ENCODE measurements at regions of chr11 and their contacts with region 1.

Region 1: GRCh38 chr11:57667736-57668435 is at the start of gene ZDHHC5:
- DNase-seq: peak; percentile 98 to 100 (median 100)
- ATAC-seq: peak; percentile 83
- H3K4me3 ChIP-seq: peak within 1 kb of the TSS; percentile 87
- H3K4me3 Mint-ChIP-seq: peak within 1 kb of the TSS; percentile 89
- H3K27ac ChIP-seq: peak within 1 kb of the TSS; percentile 98
- H3K27ac Mint-ChIP-seq: peak within 1 kb of the TSS; percentile 95
- H3K4me1 ChIP-seq: peaks cover 32% of the 10 kb centered on the region
- H3K4me1 Mint-ChIP-seq: peaks cover 55% of the 10 kb centered on the region
- H3K27me3 ChIP-seq: no peaks in the 10 kb centered on the region
- H3K27me3 Mint-ChIP-seq: no peaks in the 10 kb centered on the region
- CTCF ChIP-seq: peak; percentile 52
- total RNA-seq, gene ZDHHC5: 59.7 to 61.1 TPM

Region 2: DNA sequence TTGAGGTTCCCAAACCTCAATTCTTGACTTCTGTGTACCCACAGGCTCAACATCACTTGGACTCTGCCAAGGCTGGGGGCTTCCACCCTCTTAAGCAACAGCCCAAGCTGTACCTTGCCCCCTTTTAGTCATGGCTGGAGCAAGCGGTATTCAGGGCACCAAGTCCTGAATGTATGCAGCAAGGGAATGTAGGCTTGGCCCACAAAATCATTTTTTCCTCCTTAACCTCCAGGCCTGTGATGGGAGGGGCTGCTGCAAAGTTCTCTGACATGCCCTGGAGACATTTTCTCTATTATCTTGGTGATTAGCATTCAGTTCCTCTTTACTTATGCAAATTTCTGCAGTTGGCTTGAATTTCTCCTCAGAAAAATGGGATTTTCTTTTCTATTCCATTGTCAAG is 1861.6 kb before region 1 on chr11:
- CTCF ChIA-PET with region 1: no interaction called
- POLR2A ChIA-PET with region 1: no interaction called
- intact Hi-C with region 1: no loop called
- DNase-seq: no peak
- ATAC-seq: no peak
- H3K4me3 ChIP-seq: no peak overlapping the region
- H3K4me3 Mint-ChIP-seq: no peak overlapping the region
- H3K27ac ChIP-seq: no peak overlapping the region
- H3K27ac Mint-ChIP-seq: no peak overlapping the region
- H3K4me1 ChIP-seq: no peaks in the 10 kb centered on the region
- H3K4me1 Mint-ChIP-seq: no peaks in the 10 kb centered on the region
- H3K27me3 ChIP-seq: no peaks in the 10 kb centered on the region
- H3K27me3 Mint-ChIP-seq: no peaks in the 10 kb centered on the region
- CTCF ChIP-seq: no peak

Region 3: DNA sequence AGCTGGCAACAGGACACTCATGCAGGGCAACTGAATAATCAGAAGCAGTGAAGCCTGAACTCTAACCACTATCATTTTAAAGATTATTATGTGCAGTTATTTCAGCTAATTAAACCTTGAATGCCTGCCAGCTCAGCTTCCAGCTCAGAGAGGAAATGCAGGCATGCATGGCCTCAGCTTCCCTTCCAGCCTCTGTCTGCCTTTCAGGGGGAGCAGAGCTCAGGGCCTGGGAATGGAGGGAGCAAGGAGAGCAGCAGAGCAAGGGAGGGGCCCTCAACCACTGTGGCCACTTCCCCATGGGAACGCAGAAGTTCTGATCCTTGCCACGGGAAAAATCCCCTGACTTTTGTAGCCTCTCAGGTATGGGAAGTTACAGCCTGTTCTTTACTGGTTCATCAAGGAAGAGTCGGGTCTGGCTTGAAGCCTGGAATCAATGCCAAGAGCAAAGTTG is 398.3 kb before region 1 on chr11:
- CTCF ChIA-PET with region 1: no interaction called
- POLR2A ChIA-PET with region 1: no interaction called
- intact Hi-C with region 1: no loop called
- DNase-seq: no peak
- ATAC-seq: no peak
- H3K4me3 ChIP-seq: no peak overlapping the region
- H3K4me3 Mint-ChIP-seq: no peak overlapping the region
- H3K27ac ChIP-seq: no peak overlapping the region
- H3K27ac Mint-ChIP-seq: no peak overlapping the region
- H3K4me1 ChIP-seq: no peaks in the 10 kb centered on the region
- H3K4me1 Mint-ChIP-seq: no peaks in the 10 kb centered on the region
- H3K27me3 ChIP-seq: peaks cover 0 to 8% of the 10 kb centered on the region in 2 experiments
- H3K27me3 Mint-ChIP-seq: peaks cover 34% of the 10 kb centered on the region
- CTCF ChIP-seq: no peak

Region 4: DNA sequence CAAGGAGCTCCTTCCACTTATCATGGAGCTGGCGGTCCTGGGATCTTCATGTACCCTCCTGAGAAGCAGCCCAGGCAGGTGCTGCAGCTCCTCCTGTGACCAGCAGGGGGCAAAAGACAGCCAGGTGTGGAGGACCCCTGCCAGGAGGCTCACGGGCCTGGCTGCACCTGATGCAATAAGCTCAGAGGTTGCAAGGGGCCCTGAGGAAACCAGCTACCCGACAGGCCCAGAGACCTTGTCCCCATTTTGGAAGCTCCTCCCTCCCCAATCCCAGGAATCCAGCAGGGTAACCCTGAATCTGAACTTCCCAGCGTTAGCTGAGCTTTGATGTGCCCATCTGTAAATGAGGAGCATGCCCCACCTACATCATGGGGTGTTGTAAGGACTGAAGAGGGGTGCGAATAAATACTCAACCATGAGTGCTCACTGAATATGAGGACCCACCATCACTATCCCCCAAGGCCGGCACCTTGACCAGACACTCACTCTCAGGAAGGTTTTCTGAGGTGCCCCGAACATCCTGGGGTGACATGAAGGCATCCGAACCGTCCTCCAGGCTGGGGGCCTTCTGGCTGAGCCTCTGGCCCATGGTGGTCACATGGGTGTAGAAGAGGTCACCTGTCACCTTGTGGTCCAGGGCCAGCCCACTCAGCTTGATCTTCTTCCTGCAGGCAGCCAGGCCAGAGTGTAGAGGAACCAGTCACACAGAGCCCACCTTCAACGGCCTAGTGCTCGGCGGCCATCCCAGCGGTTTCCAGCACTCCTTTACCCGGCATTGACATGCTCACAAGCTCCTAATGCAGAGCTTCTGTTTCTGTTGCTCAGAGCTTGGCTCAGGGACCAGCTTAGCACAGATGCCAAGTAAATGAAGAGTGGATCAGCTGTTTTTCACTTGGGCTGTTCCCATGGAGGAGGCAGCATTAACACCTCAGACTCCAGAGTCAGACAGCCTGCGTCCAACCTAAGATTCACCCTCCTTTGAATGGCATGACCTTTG is 174.1 kb before region 1 on chr11:
- CTCF ChIA-PET with region 1: no interaction called
- POLR2A ChIA-PET with region 1: no interaction called
- intact Hi-C with region 1: no loop called
- DNase-seq: peak; percentile 63 to 84 (median 69)
- ATAC-seq: peak; percentile 94
- H3K4me3 ChIP-seq: no peak overlapping the region
- H3K4me3 Mint-ChIP-seq: no peak overlapping the region
- H3K27ac ChIP-seq: no peak overlapping the region
- H3K27ac Mint-ChIP-seq: no peak overlapping the region
- H3K4me1 ChIP-seq: peaks cover 4% of the 10 kb centered on the region
- H3K4me1 Mint-ChIP-seq: no peaks in the 10 kb centered on the region
- H3K27me3 ChIP-seq: no peaks in the 10 kb centered on the region
- H3K27me3 Mint-ChIP-seq: no peaks in the 10 kb centered on the region
- CTCF ChIP-seq: peak; percentile 97

Region 5: GRCh38 chr11:57567515-57568329 is 100.2 kb before region 1 on chr11 and contains the start of gene UBE2L6:
- CTCF ChIA-PET with region 1: interaction called, 5 read pairs
- POLR2A ChIA-PET with region 1: interaction called, 10 read pairs
- intact Hi-C with region 1: no loop called
- DNase-seq: peak; percentile 35 to 94 (median 74)
- ATAC-seq: peak; percentile 76
- H3K4me3 ChIP-seq: peak within 1 kb of the TSS; percentile 95
- H3K4me3 Mint-ChIP-seq: peak within 1 kb of the TSS; percentile 100
- H3K27ac ChIP-seq: peak within 1 kb of the TSS; percentile 80 to 82
- H3K27ac Mint-ChIP-seq: peak within 1 kb of the TSS; percentile 92
- H3K4me1 ChIP-seq: peaks cover 33% of the 10 kb centered on the region
- H3K4me1 Mint-ChIP-seq: peaks cover 53% of the 10 kb centered on the region
- H3K27me3 ChIP-seq: no peaks in the 10 kb centered on the region
- H3K27me3 Mint-ChIP-seq: no peaks in the 10 kb centered on the region
- CTCF ChIP-seq: no peak
- total RNA-seq, gene UBE2L6: 35.0 to 36.2 TPM

Region 6: GRCh38 chr11:57657194-57658022 is 10.5 kb before region 1 on chr11 and contains the start of gene CLP1:
- CTCF ChIA-PET with region 1: no interaction called
- POLR2A ChIA-PET with region 1: interaction called, 6 read pairs
- intact Hi-C with region 1: loop called (anchors 1 kb)
- DNase-seq: peak; percentile 94 to 100 (median 98)
- ATAC-seq: peak; percentile 95
- H3K4me3 ChIP-seq: peak within 1 kb of the TSS; percentile 93
- H3K4me3 Mint-ChIP-seq: peak within 1 kb of the TSS; percentile 96
- H3K27ac ChIP-seq: peak within 1 kb of the TSS; percentile 92 to 93
- H3K27ac Mint-ChIP-seq: peak within 1 kb of the TSS; percentile 90
- H3K4me1 ChIP-seq: peaks cover 24% of the 10 kb centered on the region
- H3K4me1 Mint-ChIP-seq: peaks cover 24% of the 10 kb centered on the region
- H3K27me3 ChIP-seq: no peaks in the 10 kb centered on the region
- H3K27me3 Mint-ChIP-seq: no peaks in the 10 kb centered on the region
- CTCF ChIP-seq: no peak
- total RNA-seq, gene CLP1: 21.8 to 24.2 TPM

Region 7: GRCh38 chr11:57741132-57742086 is 73.5 kb after region 1 on chr11 and contains the start of gene SELENOH:
- CTCF ChIA-PET with region 1: no interaction called
- POLR2A ChIA-PET with region 1: interaction called, 20 read pairs
- intact Hi-C with region 1: loop called (anchors 1 kb)
- DNase-seq: peak; percentile 82 to 97 (median 90)
- ATAC-seq: peak; percentile 89
- H3K4me3 ChIP-seq: peak within 1 kb of the TSS; percentile 92
- H3K4me3 Mint-ChIP-seq: peak within 1 kb of the TSS; percentile 97
- H3K27ac ChIP-seq: peak within 1 kb of the TSS; percentile 91 to 96
- H3K27ac Mint-ChIP-seq: peak within 1 kb of the TSS; percentile 95
- H3K4me1 ChIP-seq: peaks cover 31% of the 10 kb centered on the region
- H3K4me1 Mint-ChIP-seq: peaks cover 38% of the 10 kb centered on the region
- H3K27me3 ChIP-seq: no peaks in the 10 kb centered on the region
- H3K27me3 Mint-ChIP-seq: no peaks in the 10 kb centered on the region
- CTCF ChIP-seq: no peak
- total RNA-seq, gene SELENOH: 48.0 to 48.5 TPM

Region 8: GRCh38 chr11:57900320-57900719 is 232.4 kb after region 1 on chr11:
- CTCF ChIA-PET with region 1: no interaction called
- POLR2A ChIA-PET with region 1: no interaction called
- intact Hi-C with region 1: no loop called
- DNase-seq: no peak
- ATAC-seq: no peak
- H3K4me3 ChIP-seq: no peak overlapping the region
- H3K4me3 Mint-ChIP-seq: no peak overlapping the region
- H3K27ac ChIP-seq: no peak overlapping the region
- H3K27ac Mint-ChIP-seq: no peak overlapping the region
- H3K4me1 ChIP-seq: no peaks in the 10 kb centered on the region
- H3K4me1 Mint-ChIP-seq: no peaks in the 10 kb centered on the region
- H3K27me3 ChIP-seq: peaks cover 0 to 14% of the 10 kb centered on the region in 2 experiments
- H3K27me3 Mint-ChIP-seq: peaks cover 35% of the 10 kb centered on the region
- CTCF ChIP-seq: no peak

Region 9: DNA sequence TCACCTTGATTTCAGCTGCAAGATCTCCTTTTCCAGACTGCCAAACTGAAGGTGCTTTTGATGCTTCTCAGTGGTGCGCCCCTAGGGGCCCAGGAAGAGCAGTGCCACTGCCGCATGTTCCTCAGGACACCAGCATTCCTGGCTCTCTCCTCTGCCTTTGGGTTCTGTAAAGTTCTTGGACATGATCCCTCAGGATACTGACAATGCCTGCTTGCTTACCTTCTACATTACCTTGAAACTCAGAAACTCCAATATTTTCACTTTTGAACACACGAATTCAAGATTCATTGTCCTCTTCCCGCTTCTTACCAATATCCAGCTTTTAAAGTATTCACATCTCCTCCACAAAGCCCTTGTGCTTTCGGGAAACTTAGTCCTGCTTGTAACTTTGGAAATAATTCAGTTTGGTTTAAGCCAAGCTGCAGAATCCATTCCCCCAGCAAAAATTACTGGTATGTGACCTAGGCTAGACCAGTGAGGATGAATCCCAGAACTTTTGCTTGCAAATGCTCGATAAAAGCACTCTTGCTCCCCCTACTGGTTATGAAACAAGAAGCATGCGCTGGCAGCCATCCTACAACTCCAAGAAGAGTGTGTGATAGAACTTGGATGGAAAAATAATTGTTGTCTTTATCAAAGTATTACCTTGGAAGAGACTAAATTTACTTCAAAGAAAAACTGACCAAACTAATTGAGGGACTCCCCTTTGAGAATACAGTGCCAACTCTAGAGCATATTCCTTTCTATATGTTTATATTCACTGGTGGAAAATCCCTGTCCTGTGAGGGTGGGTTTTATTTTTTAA is 856.5 kb after region 1 on chr11:
- CTCF ChIA-PET with region 1: no interaction called
- POLR2A ChIA-PET with region 1: no interaction called
- intact Hi-C with region 1: loop called in 1 of 2 experiments (anchors 10 kb)
- DNase-seq: peak in 13 of 14 experiments; percentile 16 to 84 (median 35)
- ATAC-seq: peak; percentile 65
- H3K4me3 ChIP-seq: peak overlapping the region; percentile 39
- H3K4me3 Mint-ChIP-seq: peak overlapping the region; percentile 63
- H3K27ac ChIP-seq: peak overlapping the region; percentile 50 to 83
- H3K27ac Mint-ChIP-seq: peak overlapping the region; percentile 95
- H3K4me1 ChIP-seq: peaks cover 17% of the 10 kb centered on the region
- H3K4me1 Mint-ChIP-seq: peaks cover 78% of the 10 kb centered on the region
- H3K27me3 ChIP-seq: no peaks in the 10 kb centered on the region
- H3K27me3 Mint-ChIP-seq: no peaks in the 10 kb centered on the region
- CTCF ChIP-seq: peak; percentile 93

Measured in CD4-positive, alpha-beta T cell (primary cell).